Activated B cell treated with CpG ODN at 0.5 μM for 24 hours (primary cell): ENCODE measurements at regions of chr14 and their contacts with region 1.

Region 1: GRCh38 chr14:78959674-78960264 is 789.6 kb downstream of the NRXN3 start:
- DNase-seq: no peak
- ATAC-seq: no peak
- H3K4me3 Mint-ChIP-seq: no peak overlapping the region
- H3K27ac Mint-ChIP-seq: no peak overlapping the region
- H3K4me1 Mint-ChIP-seq: peaks cover 2% of the 10 kb centered on the region
- H3K27me3 Mint-ChIP-seq: peaks cover 5% of the 10 kb centered on the region
- CTCF ChIP-seq: peak; percentile 32

Region 2: GRCh38 chr14:78974691-78975090 is 14.9 kb after region 1 on chr14:
- CTCF ChIA-PET with region 1: interaction called, 15 read pairs
- POLR2A ChIA-PET with region 1: no interaction called
- intact Hi-C with region 1: no loop called
- DNase-seq: no peak
- ATAC-seq: no peak
- H3K4me3 Mint-ChIP-seq: no peak overlapping the region
- H3K27ac Mint-ChIP-seq: no peak overlapping the region
- H3K4me1 Mint-ChIP-seq: no peaks in the 10 kb centered on the region
- H3K27me3 Mint-ChIP-seq: no peaks in the 10 kb centered on the region
- CTCF ChIP-seq: no peak